HAP-1 (cell line): ENCODE measurements at regions of chr12 and their contacts with region 1.

Region 1: GRCh38 chr12:49342066-49342913 is 4.4 kb upstream of the DNAJC22 start:
- DNase-seq: peak; percentile 94 to 98
- H3K4me3 ChIP-seq: peak overlapping the region; percentile 39
- H3K4me1 ChIP-seq: peaks cover 12% of the 10 kb centered on the region
- H3K27me3 ChIP-seq: no peaks in the 10 kb centered on the region

Region 2: DNA sequence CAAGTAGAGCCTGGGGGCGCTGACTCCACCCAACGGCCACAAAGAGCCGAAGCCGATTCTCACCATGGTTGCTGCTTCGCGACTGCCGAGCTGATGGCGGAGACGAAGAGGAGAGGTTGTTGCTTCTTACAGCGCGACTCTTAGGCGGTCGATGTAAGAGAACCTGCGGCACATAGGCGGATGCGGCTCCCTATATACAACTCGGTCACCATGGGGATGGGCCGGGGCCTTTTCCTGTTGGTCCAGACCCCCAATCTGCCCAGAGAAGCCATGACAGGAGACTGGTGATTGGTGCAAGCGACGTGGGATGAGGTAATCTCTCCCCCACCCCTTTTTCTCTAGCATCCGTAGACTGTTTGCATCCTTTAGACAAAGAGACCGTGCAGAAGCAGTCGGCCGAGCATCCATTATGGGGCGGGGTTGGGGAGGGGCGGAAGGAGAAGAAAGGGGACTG is 153.3 kb before region 1 on chr12 and contains the start of gene TUBA1A:
- in situ Hi-C with region 1: no loop called
- DNase-seq: peak; percentile 95 to 96
- H3K4me3 ChIP-seq: peak within 1 kb of the TSS; percentile 88
- H3K4me1 ChIP-seq: peaks cover 23% of the 10 kb centered on the region
- H3K27me3 ChIP-seq: no peaks in the 10 kb centered on the region

Region 3: GRCh38 chr12:49288412-49288853 is 53.9 kb before region 1 on chr12:
- in situ Hi-C with region 1: loop called (anchors 5 kb)
- DNase-seq: peak; percentile 43 to 77
- H3K4me3 ChIP-seq: no peak overlapping the region
- H3K4me1 ChIP-seq: peaks cover under 1% of the 10 kb centered on the region; the same call in 1 of the 2 replicates
- H3K27me3 ChIP-seq: no peaks in the 10 kb centered on the region